Posterior vena cava (tissue), 2 donors: ENCODE measurements at regions of chr2 and their contacts with region 1.

Region 1: DNA sequence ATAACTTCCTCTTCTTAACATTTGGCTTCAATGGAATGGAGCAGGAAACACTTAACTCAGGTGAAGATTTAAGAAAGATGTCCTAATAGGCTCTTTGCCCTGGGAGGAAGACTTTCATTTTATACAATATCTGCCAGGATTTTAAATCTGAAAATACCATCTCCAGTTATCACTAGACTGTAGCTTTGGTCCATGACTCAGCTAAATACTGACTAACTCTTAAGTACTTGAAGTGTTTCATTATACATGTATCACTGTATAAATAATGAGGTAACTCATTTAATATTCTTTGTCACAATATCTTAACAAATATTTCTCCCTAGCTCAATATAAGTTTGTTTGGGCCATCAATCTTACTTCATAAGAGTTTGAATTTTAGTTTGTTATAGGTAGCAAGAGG is 34.7 kb downstream of the RBKS start:
- DNase-seq: no peak

Region 2: GRCh38 chr2:25899404-25899970 is 1956.0 kb before region 1 on chr2:
- intact Hi-C with region 1: no loop called
- DNase-seq: no peak

Region 3: GRCh38 chr2:27762951-27763906 is 92.2 kb before region 1 on chr2:
- intact Hi-C with region 1: loop called in 1 of 2 experiments (anchors 5 kb)
- DNase-seq: no peak

Region 4: DNA sequence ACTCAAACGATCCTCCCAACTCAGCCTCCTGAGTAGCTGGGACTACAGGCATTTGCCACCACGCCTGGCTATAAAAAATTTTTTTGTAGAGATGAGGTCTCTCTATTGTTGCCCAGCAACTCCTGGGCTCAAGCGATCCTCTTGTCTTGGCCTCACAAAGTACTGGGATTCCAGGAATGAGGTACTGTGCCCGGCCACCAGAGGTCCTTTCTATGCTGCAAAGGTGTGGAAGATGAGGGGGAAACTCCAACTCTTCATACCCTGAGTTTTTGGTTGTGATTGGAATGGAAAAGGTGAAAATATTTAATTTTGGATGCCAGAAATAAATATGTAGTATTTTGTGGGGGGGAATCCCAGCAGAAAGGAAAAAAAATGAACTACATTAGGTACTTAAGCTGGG is 48.0 kb before region 1 on chr2:
- intact Hi-C with region 1: no loop called
- DNase-seq: no peak

Region 5: DNA sequence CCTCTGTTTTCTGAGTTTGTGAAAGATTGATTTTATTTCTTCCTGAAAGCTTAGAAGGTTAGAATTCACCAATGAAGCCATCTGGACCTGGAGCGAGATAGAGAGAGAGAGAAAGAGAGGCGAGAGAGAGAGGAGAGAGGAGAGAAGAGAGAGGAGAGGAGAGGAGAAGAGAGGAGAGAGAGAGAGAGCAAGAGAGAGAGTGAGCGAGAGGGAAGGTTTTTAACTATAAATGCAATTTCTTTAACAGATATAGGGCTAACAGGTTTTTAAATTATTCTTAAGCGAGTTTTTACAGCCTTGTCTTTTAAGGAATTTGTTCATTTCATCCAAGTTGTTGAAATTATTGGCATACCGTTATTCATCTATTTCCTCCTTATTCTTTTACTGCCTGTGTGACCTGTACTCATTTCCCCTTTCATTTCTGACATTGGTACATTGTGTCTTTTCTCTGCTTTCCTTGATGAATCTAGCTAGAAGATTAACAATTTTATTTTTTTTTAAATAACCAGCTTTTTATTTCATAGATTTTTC is 91.1 kb after region 1 on chr2:
- intact Hi-C with region 1: loop called in 1 of 2 experiments (anchors 5 kb)
- DNase-seq: no peak